ENCODE measurements at regions of chr14 and their contacts with region 1.

Region 1: GRCh38 chr14:102973706-102974285 is 51.3 kb downstream of the AMN start:
- DNase-seq: peak in 5 of 10 donors; percentile 30 to 90 (median 84)

Region 2: DNA sequence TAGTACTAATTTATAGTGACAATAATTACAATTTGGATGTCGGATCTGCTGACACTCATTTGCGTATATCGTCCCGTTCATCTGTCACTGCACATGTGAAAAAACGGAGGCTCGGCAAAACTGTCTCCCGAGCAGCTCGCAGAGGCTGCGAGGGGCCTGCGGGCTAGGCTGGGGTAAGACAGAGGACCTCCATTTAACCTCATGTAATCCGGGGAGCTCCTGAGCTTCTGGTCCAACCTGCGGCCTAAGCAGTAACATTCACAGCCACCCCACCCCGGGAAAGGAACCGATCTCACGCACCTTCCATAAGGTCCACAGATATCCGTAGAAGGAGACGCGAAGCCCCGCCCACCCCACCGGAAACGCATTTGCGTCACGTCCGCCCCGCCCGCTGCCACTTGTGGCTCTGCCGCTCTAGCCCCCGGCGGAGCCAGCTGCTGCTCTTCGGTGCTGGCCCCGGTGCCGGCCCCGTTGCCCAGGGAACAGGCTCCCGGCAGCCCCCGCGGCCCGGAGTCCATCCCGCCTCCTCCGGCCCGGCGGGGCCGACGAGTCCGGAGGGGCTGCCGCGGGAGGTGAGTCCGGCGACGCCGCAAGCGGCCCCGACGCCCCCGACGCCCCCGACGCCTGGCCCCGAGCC is 611.1 kb before region 1 on chr14 and contains the starts of genes CINP and TECPR2:
- intact Hi-C with region 1: no loop called
- DNase-seq: peak; percentile 98 to 100 (median 100)

Region 3: DNA sequence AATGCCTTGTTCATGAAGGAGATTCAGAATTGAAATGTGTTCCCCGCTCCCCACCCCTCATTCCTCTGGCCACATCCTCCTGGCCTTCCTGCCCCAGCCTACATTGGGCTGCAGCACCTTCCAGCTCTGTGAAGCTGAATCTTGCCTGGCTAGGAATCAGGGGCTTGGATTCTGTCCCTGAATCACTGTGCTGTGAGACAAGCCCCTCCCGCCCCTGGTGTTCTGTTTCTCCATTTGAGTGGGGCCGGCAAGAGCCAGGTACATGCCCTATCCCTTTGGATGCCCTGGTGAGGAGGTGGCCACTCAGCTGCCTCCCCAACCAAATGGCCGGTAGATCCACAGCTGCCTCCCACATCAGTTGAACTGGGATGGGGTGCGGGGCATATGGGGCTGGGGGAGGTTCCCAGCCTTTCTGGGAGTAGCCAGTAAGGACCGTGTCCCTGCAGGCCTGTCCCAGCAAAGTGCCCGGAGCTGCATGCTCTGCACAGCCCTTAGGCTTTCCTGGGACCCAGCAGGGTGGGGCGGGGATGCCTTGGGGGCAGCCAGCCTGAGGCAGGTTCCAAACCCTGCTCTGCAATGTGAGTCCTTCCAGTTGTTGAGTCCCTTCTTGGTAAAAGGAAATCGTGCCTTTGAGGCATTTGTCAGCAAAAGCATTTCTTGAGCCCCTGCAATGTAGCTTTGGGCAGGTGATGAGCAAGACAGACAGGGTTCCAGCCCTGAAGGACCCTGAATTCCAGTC is 234.9 kb before region 1 on chr14:
- intact Hi-C with region 1: no loop called
- DNase-seq: peak in 1 of 10 donors; percentile 19

Region 4: DNA sequence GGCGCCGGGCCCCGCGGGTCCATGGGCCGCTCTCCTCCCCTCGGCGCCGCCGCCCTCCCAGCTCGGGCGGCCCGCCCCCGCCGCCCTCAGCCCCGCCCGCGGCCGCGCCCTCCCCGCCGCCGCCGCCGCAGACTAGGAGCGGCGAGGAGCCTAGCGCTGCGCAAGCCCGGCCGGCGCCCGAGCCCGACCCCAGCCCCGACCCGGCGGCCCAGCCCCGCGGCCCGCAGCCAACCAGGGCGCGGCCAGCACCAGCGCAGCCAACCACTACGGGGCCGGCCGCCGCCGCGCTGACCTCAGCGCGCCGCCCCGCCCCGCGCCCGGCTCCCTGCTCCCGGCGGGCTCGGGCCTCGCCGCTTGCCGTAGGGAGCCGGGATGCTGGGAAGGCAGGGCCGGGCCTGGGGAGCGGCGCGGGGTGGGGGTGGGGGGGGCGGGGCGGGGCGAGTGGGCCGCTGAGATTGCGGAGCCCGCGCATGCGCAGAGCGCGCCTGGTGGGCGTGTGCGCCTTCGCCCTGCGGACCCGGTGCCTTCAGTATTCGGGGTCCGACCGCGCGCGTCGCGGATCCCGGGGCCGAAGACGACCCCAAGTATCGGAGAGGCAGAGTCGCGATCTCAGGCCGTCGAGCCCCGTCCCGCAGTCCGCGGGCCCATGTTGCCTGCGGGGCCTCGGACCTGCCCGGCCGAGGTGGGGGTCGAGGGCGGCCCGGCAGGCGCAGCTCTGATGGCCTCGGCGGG is 83.7 kb after region 1 on chr14 and contains the start of gene CDC42BPB:
- intact Hi-C with region 1: loop called (anchors 5 kb)
- DNase-seq: peak; percentile 77 to 98 (median 84)